ENCODE measurements at regions of chr2 and their contacts with region 1.

Region 1: GRCh38 chr2:28904295-28904694 is 9.8 kb downstream of the WDR43 start:
- DNase-seq: no peak
- H3K4me3 ChIP-seq: no peak overlapping the region
- H3K27ac ChIP-seq: no peak overlapping the region
- H3K4me1 ChIP-seq: no peaks in the 10 kb centered on the region
- H3K27me3 ChIP-seq: no peaks in the 10 kb centered on the region
- CTCF ChIP-seq: no peak
- EP300 ChIP-seq: no peak
- POLR2A ChIP-seq: 0 out of 3 replicates have a peak, but pooled peaks of 1 of the 2 experiments have one; percentile 27
- RAD21 ChIP-seq: no peak

Region 2: DNA sequence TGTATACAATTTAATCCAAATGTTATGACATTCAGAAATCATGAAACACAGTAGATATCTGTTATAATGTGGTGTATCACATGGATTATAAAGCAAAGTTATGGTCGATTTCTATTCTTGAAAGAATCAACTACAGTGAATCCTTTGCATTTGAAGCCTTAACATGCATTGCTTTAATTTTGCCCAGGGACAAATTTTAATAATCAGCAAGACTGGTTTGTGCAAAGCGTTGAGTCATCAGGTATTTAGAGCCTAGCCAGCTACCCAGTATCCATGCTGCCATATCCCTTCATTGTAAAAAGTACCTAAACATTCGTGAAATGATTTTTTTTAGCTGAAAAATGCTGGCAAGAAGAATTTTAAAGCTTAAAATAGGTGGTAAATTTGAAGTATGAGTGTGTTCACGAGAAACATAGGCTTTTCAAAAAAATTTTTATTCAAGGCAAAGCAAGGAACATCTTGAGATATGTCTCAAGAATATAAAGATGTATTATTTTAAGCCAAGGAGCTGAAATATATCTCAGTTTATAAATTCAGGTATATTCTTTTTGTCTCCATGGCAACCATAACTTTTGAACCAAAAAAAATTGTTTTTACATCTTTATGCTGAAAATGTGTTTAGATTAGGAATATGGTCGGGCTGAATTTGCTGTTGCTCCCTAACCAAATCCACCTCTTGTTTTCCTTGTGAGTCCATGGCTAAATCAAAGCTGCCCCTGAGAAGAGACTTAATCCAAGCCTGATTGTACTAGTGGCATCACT is 102.4 kb before region 1 on chr2:
- CTCF ChIA-PET with region 1: no interaction called
- POLR2A ChIA-PET with region 1: no interaction called
- DNase-seq: no peak
- H3K4me3 ChIP-seq: no peak overlapping the region
- H3K27ac ChIP-seq: no peak overlapping the region
- H3K4me1 ChIP-seq: no peaks in the 10 kb centered on the region
- H3K27me3 ChIP-seq: no peaks in the 10 kb centered on the region
- CTCF ChIP-seq: no peak
- EP300 ChIP-seq: no peak
- POLR2A ChIP-seq: no peak
- RAD21 ChIP-seq: no peak

Region 3: GRCh38 chr2:28915939-28916338 is 11.6 kb after region 1 on chr2:
- CTCF ChIA-PET with region 1: interaction called, 3 read pairs
- POLR2A ChIA-PET with region 1: interaction called, 11 read pairs
- DNase-seq: no peak
- H3K4me3 ChIP-seq: no peak overlapping the region
- H3K27ac ChIP-seq: no peak overlapping the region
- H3K4me1 ChIP-seq: no peaks in the 10 kb centered on the region
- H3K27me3 ChIP-seq: no peaks in the 10 kb centered on the region
- CTCF ChIP-seq: no peak
- EP300 ChIP-seq: no peak
- POLR2A ChIP-seq: no peak
- RAD21 ChIP-seq: no peak

Measured in H1 (cell line).